Motor neuron (in vitro differentiated cells): ENCODE measurements at regions of chr6 and their contacts with region 1.

Region 1: DNA sequence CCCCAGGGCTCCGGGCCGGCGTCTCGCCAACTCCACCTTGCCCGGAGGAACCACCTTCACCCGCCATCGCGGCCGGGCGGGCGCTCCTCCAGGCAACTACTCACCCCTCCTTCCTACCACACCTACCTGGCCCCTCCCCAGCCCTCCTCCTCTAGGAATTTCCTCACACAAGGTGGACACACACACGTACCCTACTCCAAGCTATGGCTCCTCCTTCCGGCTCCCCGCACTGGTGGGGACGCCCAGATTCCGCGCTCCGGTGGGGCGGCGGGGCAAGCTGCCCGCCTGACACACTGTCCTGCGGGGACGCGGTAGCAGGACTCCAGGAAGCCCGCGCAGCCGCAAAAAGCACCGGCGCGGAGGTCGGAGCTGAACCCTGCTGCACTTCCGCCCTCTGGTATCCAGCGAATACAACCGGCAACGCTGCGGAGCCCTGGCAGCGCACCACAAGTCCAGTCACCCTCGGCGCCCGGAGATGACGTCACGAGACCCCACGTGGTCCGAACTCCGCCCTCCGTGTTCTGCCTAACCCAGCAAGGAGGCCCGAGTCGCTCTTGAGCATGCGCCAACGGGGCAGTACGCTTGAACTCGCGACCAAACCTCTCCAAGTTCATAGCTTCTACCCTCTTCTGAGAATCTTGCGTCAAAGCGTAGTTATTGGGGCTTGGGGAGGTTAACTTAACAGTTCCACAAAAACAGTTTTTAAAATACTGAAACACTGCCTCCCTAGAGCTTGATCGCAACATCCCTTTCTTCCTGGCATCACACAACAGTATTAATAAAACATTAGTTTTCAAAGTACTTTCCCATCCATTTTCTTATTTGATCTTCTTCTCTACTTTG is at the start of gene ATG5:
- ATAC-seq: peak; percentile 90 to 99 (median 98)
- H3K4me3 ChIP-seq: peak within 1 kb of the TSS; percentile 67 to 90 (median 74)
- H3K27ac ChIP-seq: peak within 1 kb of the TSS; percentile 89 to 92
- H3K4me1 ChIP-seq: peaks cover 0 to 9% of the 10 kb centered on the region in 2 donors
- total RNA-seq, gene ATG5: 19.3 to 39.2 (median 28.4) TPM

Region 2: DNA sequence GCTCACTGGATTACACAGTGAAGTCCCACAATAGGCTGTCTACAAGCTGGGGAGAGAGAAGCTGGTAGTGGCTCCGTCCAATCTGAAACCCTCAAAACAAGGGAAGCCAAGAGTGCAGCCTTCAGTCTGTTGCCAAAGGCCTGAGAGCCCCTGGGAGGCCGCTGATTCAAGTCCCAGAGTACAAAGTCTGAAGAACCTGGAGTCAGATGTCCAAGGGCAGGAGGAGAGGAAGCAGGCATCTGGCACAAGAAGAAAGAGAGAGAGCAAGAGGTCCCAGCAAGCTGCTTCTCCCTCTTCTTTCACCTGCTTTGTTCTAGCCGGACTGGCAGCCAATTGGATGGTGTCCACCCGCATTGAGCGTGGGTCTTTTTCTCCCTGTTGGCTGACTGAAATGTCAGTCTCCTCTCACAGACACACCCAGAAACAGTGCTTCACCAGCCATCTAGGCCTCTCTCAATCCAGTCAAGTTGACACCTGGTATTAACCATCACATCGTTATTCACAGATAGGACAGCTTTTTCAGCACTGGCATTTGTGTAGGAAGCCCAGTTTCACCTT is 86.2 kb after region 1 on chr6:
- in situ Hi-C with region 1: no loop called
- ATAC-seq: no peak
- H3K4me3 ChIP-seq: no peak overlapping the region
- H3K27ac ChIP-seq: no peak overlapping the region
- H3K4me1 ChIP-seq: no peaks in the 10 kb centered on the region

Region 3: DNA sequence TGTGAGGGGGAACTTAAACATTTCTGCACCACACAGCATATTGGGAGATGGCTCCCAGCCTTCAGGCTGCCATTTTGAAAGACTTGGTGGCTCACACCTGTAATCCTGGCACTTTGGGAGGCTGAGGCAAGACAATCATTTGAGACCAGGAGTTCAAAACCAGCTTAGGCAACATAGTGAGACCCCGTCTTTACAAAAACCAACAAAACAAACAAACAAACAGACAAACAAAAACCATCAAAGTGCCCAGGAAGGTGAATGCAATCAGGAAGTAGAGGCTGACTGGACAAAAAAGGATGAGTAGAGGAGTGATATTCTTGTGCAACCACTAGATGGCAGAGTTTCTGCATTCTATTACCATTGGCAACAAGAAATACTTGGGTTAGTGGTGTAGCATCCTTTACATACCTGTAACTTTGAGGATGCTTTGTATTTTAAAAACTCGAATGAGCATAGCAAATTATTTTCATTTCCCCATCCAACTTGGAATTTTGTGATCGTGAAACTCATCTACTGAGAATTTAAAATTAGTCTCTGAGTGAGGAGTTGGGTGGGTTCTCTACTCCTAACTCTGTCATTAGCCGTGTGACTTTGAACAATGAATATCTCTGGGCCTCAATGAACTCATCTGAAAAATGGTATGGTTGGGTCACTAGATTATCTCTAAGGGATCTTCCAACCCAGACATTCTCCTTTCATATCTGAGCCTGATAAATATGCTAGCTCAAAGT is 119.4 kb after region 1 on chr6:
- in situ Hi-C with region 1: loop called in 1 of 9 experiments (anchors 25 kb)
- ATAC-seq: peak in 5 of 8 experiments; percentile 44 to 78 (median 71)
- H3K4me3 ChIP-seq: no peak overlapping the region
- H3K27ac ChIP-seq: no peak overlapping the region
- H3K4me1 ChIP-seq: no peaks in the 10 kb centered on the region